Gastrocnemius medialis (tissue), 4 donors: ENCODE measurements at regions of chr14 and their contacts with region 1.

Region 1: DNA sequence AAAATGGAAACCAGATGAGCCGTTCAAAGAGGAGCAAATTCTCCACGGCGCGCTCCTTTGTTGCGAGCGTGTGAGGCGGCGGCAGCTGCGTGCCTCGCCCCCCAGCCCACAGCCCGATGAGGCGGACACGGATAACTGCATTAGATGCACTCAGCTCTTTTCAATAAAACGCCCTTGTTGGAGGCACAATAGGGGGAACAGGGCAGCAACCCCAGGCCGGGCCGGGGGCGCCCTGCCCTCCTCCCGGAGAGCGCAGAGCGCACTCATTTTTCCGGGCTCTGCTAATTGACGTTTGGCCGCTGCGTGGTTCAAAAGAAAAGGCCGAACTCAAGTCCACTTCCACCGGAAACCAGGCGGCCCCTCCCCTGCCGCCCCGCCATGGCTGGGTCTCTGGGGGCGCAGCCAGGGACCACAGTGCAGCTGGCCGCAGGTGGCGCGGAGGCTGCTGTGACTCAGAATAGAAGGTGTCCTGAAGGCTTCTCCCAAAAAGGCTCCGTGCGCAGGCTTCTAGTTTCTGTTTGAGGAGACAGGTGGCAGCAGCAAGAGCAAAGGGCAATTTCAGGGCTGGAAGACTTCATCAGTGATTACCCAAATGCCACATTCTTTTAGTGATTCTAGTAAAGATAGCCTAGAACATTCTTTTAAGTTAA is 29.0 kb upstream of the SMOC1 start:
- DNase-seq: peak; percentile 7 to 71
- ATAC-seq: peak; percentile 63 to 68
- H3K4me3 ChIP-seq: peak overlapping the region; percentile 36 to 51 (median 43)
- H3K27ac ChIP-seq: peak overlapping the region; percentile 78 to 85 (median 80)
- H3K4me1 ChIP-seq: peaks cover 14 to 16% of the 10 kb centered on the region in 2 donors
- H3K27me3 ChIP-seq: no peaks in the 10 kb centered on the region
- CTCF ChIP-seq: no peak
- POLR2A ChIP-seq: peak; percentile 48 to 59

Region 2: GRCh38 chr14:69780952-69781351 is 69.3 kb before region 1 on chr14:
- in situ Hi-C with region 1: no loop called
- intact Hi-C with region 1: no loop called
- DNase-seq: no peak
- ATAC-seq: no peak
- H3K4me3 ChIP-seq: no peak overlapping the region
- H3K27ac ChIP-seq: no peak overlapping the region
- H3K4me1 ChIP-seq: peaks cover 2 to 13% of the 10 kb centered on the region in 2 donors
- H3K27me3 ChIP-seq: no peaks in the 10 kb centered on the region
- CTCF ChIP-seq: no peak
- POLR2A ChIP-seq: no peak

Region 3: DNA sequence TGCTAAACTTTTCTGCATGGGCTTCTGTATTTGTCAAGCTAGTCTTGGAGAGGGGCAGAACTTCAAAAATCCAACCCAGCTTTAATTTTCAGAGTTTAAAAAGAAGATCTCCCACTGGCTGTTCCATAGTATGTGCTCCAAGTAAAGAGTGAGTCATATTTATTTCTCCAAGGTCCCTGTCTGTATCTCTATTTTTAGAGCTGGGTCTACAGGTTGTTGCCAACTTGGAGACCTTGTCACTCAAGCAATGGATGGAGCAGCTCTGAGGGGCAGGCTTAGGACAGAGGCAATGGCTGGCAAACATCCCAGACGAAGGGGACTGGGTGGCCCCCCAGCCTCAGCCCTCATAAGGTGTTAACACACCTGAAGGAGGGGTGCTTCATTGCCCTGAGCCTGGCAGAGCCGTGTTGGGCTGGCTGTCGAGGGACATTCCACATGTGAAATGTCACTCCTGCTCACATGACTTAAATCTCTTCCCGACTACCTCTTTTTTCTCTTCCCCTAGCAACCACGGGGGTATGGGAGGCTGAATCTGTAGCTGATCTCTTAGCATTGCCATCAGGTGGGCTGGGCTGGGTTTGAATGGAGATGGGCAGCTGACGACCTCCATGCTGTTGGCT is 132.1 kb after region 1 on chr14:
- in situ Hi-C with region 1: no loop called
- intact Hi-C with region 1: loop called (anchors 1 kb)
- DNase-seq: peak in 1 of 2 donors; percentile 25
- ATAC-seq: peak; percentile 95 to 99
- H3K4me3 ChIP-seq: peak overlapping the region in 2 of 4 donors; percentile 11 to 25
- H3K27ac ChIP-seq: peak overlapping the region; percentile 44 to 67 (median 56)
- H3K4me1 ChIP-seq: peaks cover 18 to 19% of the 10 kb centered on the region in 2 donors
- H3K27me3 ChIP-seq: no peaks in the 10 kb centered on the region
- CTCF ChIP-seq: no peak
- POLR2A ChIP-seq: no peak